Breast epithelium (tissue), 4 donors: ENCODE measurements at regions of chr2 and their contacts with region 1.

Region 1: GRCh38 chr2:174985630-174986029 is 19.6 kb downstream of the CHN1 start:
- DNase-seq: no peak
- H3K4me3 ChIP-seq: no peak overlapping the region
- H3K27ac ChIP-seq: no peak overlapping the region
- H3K4me1 ChIP-seq: no peaks in the 10 kb centered on the region
- H3K27me3 ChIP-seq: no peaks in the 10 kb centered on the region
- CTCF ChIP-seq: peak in 2 of 3 donors; percentile 35 to 39
- POLR2A ChIP-seq: no peak

Region 2: GRCh38 chr2:174764280-174765255 is 221.1 kb before region 1 on chr2 and contains the start of gene CHRNA1:
- intact Hi-C with region 1: loop called (anchors 10 kb)
- DNase-seq: no peak
- H3K4me3 ChIP-seq: peak within 1 kb of the TSS in 1 of 3 donors; percentile 40
- H3K27ac ChIP-seq: peak within 1 kb of the TSS; percentile 41 to 78
- H3K4me1 ChIP-seq: no peaks in the 10 kb centered on the region
- H3K27me3 ChIP-seq: no peaks in the 10 kb centered on the region
- CTCF ChIP-seq: no peak
- POLR2A ChIP-seq: no peak
- total RNA-seq, gene CHRNA1: 8.2 TPM in 1 of 3 donors, not detected in the others

Region 3: DNA sequence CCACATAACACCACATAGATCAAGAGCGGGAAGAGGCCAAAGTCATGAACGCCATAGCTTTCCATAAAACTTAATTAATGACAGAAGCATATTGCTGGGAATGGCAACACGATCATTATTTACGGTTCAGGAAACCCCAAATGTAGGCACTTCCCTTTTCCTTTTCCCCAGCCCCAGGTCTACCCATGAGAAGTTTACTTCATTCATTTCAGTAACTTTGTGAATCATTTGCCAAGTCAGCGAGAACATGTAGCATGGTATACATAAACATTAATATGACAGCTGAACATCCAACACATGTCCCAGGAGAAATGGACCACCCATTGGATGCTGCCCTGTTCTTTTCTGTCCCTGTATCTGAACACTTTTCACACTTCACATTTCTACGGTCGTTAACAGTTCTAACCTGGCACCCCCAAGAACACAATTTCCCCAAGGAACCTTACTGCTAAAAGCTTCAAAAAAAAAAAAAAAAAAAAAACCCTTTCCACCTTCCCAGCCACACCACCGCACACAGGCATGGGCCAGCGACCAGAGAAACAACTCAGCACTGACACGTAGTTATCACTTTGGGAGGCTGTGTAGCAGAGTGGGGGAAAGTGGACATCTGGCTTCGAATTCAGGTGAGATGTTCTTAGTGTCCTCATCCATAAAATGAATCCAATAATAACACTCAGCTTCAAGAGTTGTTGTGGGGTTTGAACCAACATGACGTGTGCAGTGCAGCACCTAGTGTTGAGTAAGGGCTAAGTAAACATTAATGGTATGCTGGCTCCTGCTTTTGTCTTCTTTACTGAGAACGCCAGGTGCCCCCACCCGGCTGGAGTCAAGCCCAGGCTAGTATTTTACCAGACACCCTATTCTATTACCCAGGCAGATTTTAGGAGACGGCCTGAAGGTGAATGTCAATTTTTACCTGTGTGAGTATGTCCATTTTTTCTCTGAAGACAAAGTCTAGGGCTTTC is 644.9 kb after region 1 on chr2:
- intact Hi-C with region 1: no loop called
- DNase-seq: no peak
- H3K4me3 ChIP-seq: no peak overlapping the region
- H3K27ac ChIP-seq: no peak overlapping the region
- H3K4me1 ChIP-seq: no peaks in the 10 kb centered on the region
- H3K27me3 ChIP-seq: no peaks in the 10 kb centered on the region
- CTCF ChIP-seq: no peak
- POLR2A ChIP-seq: no peak